Heart left ventricle (tissue), 16 donors: ENCODE measurements at regions of chr10 and their contacts with region 1.

Region 1: DNA sequence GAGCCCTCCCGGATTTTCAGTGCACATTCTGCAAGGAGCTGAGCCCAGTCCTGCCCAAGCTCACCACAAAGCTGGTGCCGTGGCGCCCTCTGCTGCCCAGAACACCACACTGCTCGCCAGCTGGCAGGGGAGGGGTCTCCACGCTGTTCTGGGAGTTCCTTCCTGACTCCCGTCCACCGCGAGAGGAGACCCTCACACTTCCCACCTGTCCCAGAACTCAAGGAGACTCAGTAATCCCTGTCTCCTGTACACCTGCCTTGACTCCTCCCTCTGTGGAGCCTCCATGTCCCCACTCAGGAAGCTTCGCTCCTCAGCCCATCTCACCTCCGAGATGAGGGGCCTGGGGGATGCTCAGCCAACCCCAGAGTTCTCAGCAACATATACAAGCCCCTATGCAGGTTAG is 11.3 kb downstream of the C10orf105 start:
- DNase-seq: peak; percentile 46 to 86 (median 62)
- ATAC-seq: peak in 3 of 4 donors; percentile 50 to 62 (median 52)
- H3K4me3 ChIP-seq: no peak overlapping the region
- H3K27ac ChIP-seq: no peak overlapping the region
- H3K4me1 ChIP-seq: peaks cover 0 to 30% (median 18%) of the 10 kb centered on the region in 12 donors
- H3K27me3 ChIP-seq: no peaks in the 10 kb centered on the region
- CTCF ChIP-seq: peak; percentile 79 to 90 (median 87)
- POLR2A ChIP-seq: no peak

Region 2: DNA sequence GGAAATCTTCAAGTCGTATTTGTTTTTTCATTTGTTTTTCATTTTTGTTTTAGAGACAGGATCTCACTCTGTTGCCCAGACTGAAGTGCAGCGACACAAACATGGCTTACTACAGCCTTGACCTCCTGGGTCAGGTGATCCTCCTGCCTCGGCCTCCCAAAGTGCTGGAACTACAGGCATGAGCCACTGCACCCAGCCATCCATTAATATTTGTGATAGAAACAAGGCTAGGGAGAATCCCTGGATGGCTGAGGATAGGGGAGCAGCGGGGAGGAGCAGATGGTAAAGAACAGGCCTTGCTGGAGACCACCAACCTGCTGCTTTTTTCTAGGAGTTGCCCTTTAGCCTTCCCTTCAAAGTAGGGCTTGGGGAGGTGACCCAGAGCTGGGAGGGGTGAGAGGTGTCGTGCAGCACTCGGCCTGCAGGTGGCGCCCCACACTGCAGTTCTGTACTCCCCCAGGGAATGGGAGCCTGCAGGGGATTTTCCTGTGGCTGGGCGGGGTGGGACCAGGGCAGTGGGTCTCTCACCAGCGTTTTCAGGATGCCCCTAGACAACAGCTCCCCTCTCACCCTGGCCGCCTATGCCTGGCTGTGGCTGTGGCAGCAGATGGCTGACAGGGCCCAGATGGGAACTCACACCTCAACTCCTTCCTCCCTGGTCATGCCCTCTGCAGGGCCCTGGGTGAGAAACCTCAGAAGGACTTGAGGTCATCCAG is 324.2 kb before region 1 on chr10:
- intact Hi-C with region 1: loop called in 5 of 10 experiments (anchors 2 to 5 kb)
- DNase-seq: peak; percentile 55 to 83 (median 71)
- ATAC-seq: peak; percentile 82 to 92 (median 89)
- H3K4me3 ChIP-seq: no peak overlapping the region
- H3K27ac ChIP-seq: no peak overlapping the region
- H3K4me1 ChIP-seq: peaks cover 0 to 6% (median 0%) of the 10 kb centered on the region in 12 donors
- H3K27me3 ChIP-seq: no peaks in the 10 kb centered on the region
- CTCF ChIP-seq: peak; percentile 79 to 92 (median 88)
- POLR2A ChIP-seq: no peak

Region 3: DNA sequence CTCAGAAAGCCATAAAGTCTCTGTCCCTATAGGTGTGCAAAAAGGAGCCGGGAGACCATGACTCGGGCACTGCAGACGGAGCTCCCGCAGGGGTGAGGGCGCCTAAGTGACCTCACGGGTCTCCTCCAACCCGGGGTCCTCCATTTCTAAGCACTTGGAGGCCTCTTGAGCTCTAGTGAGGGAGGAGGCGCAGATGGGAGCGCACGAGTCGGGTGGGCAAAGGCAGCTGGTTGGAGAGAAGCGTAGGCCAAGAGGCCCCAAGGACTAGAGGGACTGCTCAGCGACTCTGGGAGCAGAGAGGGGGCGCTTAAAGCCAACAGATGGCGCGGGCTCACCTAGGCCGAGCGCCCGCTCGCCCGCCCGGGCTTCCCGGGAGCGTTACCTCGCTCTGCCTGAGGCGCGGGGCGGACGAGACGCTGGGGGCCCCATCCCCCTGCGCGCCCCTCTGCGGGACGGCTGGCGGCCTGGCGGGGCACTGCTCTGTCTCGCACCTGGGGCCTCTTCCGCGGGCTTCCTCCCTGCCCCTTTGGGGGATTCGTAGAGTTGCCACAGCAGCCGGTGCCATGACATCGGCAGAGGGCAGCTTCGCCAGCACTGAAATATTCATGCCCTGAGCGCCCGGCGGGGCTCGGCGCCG is 312.1 kb before region 1 on chr10:
- intact Hi-C with region 1: loop called in 5 of 10 experiments (anchors 5 to 10 kb)
- DNase-seq: peak; percentile 68 to 83 (median 73)
- ATAC-seq: peak; percentile 84 to 95 (median 92)
- H3K4me3 ChIP-seq: peak overlapping the region; percentile 37 to 79 (median 58)
- H3K27ac ChIP-seq: peak overlapping the region in 3 of 12 donors; percentile 57 to 70 (median 70)
- H3K4me1 ChIP-seq: peaks cover 0 to 28% (median 12%) of the 10 kb centered on the region in 12 donors
- H3K27me3 ChIP-seq: peaks cover 0 to 51% (median 18%) of the 10 kb centered on the region in 9 donors
- CTCF ChIP-seq: peak; percentile 47 to 82 (median 74)
- POLR2A ChIP-seq: no peak

Region 4: GRCh38 chr10:71569775-71570588 is 138.3 kb before region 1 on chr10:
- intact Hi-C with region 1: loop called in 1 of 10 experiments (anchors 10 kb)
- DNase-seq: peak; percentile 51 to 74 (median 71)
- ATAC-seq: peak in 3 of 4 donors; percentile 22 to 73 (median 62)
- H3K4me3 ChIP-seq: no peak overlapping the region
- H3K27ac ChIP-seq: no peak overlapping the region
- H3K4me1 ChIP-seq: no peaks in the 10 kb centered on the region
- H3K27me3 ChIP-seq: no peaks in the 10 kb centered on the region
- CTCF ChIP-seq: peak; percentile 80 to 94 (median 86)
- POLR2A ChIP-seq: no peak

Region 5: GRCh38 chr10:71663311-71663710 is 45.0 kb before region 1 on chr10:
- intact Hi-C with region 1: loop called in 1 of 10 experiments (anchors 5 kb)
- DNase-seq: no peak
- ATAC-seq: no peak
- H3K4me3 ChIP-seq: no peak overlapping the region
- H3K27ac ChIP-seq: no peak overlapping the region
- H3K4me1 ChIP-seq: no peaks in the 10 kb centered on the region
- H3K27me3 ChIP-seq: no peaks in the 10 kb centered on the region
- CTCF ChIP-seq: no peak
- POLR2A ChIP-seq: no peak